ENCODE measurements at regions of chr6 and their contacts with region 1.

Region 1: DNA sequence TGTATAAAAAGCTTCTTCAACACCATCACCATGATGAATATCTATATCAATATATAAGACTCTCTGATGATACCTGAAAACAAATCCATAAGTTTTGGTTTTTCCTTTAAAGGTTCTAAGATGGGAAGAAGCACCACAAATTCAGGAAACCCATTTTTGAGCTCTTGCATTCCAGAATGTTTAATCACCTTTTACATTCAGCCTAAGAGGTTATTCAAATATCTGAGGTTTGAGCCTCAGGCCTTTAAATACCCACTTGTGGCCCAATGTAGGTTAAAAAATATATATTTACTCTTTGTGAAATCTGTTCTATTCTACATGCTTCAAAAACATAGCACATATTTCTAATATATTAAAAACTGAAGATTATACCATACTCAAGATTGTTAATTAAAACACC is 17.6 kb downstream of the HDAC2 start:
- DNase-seq: no peak
- H3K4me3 ChIP-seq: no peak overlapping the region
- H3K27ac ChIP-seq: no peak overlapping the region
- H3K4me1 ChIP-seq: no peaks in the 10 kb centered on the region
- H3K27me3 ChIP-seq: no peaks in the 10 kb centered on the region
- CTCF ChIP-seq: no peak
- EP300 ChIP-seq: no peak
- POLR2A ChIP-seq: no peak
- RAD21 ChIP-seq: no peak

Region 2: DNA sequence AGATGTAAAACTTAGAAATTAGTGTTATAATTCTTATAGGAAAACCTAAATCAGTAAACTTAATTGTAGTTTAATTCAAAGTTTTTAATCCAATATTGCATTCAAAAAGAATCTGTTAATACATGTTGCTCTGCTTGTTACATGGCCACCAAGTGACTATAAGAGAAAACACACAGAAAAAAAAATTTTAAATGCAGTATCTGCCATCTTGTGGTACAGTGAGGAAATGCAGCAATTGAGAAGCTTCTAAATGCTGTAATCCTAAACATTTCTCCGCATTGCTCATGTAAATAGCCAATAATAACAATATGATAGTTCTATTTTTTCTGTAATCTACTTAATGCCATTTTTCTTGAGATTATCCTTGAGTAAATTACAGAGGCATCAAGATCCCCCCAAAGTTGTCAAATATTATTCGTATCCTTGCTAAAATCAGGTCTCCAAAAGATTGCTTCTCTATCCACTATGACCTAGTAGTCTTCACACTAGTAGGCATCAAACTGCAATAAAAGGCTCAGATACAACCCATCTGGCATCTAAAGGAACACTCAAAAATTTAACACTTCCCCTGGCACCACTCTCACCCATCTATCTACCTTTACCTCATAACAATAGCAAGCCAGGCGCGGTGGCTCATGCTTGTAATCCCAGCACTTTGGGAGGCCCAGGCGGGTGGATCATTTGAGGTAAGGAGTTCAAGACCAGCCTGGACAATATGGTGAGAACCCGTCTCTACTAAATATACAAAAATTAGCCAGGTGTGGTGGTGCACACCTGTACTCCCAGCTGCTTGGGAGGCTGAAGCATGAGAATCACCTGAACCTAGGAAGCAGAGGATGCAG is 17.0 kb before region 1 on chr6:
- CTCF ChIA-PET with region 1: interaction called, 11 read pairs
- POLR2A ChIA-PET with region 1: interaction called, 5 read pairs
- DNase-seq: no peak
- H3K4me3 ChIP-seq: no peak overlapping the region
- H3K27ac ChIP-seq: no peak overlapping the region
- H3K4me1 ChIP-seq: no peaks in the 10 kb centered on the region
- H3K27me3 ChIP-seq: no peaks in the 10 kb centered on the region
- CTCF ChIP-seq: peak in 2 of 3 experiments; percentile 63 to 66; a peak in 2 of 4 replicates
- EP300 ChIP-seq: no peak
- POLR2A ChIP-seq: no peak
- RAD21 ChIP-seq: peak; percentile 51 to 55

Region 3: DNA sequence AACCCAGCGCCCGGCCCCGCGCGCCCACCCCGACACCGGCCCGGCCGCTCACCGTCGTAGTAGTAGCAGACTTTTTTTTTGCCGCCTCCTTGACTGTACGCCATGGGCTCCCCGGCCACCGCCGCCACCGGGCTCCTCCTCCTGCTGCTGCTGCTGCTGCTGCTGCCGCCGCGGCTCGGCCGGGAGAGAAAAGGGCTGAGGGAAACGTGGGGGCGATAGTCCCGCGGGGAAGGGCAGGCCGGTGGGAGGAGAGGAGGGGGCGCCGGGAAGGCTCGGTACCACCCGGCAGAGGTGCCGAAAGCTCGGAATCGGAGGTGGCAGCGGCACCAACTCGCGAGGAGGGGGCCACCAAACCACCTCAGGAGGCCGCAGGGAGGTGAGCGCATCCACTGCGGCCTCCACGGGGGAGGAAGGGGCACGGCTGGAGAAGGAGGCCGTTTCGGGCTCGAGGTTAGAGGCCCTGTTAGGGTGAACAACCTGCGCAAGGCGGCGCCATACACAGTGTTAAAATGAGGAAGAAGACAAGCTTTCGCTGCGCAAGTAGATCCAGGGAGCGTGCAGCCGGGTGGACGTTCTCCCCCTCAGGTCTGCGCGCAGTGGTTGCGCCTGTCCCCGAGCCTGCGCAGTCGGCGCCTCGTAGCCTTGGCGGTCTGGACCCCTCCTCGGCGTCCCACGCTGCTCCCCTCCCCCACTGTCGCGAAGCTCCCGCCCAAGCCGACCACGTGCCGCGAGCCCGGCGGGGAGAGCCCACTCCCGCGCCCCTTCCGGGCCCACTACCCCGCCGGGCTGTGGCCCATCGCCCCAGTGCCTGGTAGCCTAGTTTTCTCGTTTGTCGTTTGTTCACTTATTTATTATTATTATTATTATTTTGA is 17.7 kb after region 1 on chr6 and contains the start of gene HDAC2:
- CTCF ChIA-PET with region 1: interaction called, 3 read pairs
- POLR2A ChIA-PET with region 1: interaction called, 26 read pairs
- DNase-seq: peak; percentile 57 to 92
- H3K4me3 ChIP-seq: peak within 1 kb of the TSS; percentile 84 to 99 (median 88)
- H3K27ac ChIP-seq: peak within 1 kb of the TSS; percentile 99
- H3K4me1 ChIP-seq: peaks cover 0 to 9% (median 3%) of the 10 kb centered on the region in 4 experiments; a peak in 2 of 7 replicates
- H3K27me3 ChIP-seq: peaks cover 0 to 3% (median 1%) of the 10 kb centered on the region in 4 experiments; a peak in 2 of 7 replicates
- CTCF ChIP-seq: peak in 2 of 3 experiments; percentile 3 to 20; a peak in 2 of 4 replicates
- EP300 ChIP-seq: peak in 1 of 2 experiments; percentile 98; a peak in 2 of 3 replicates
- POLR2A ChIP-seq: peak; percentile 32 to 40; a peak in 2 of 3 replicates
- RAD21 ChIP-seq: peak; percentile 13 to 29; a peak in 1 of 4 replicates
- total RNA-seq, gene HDAC2: 374 and 383 TPM in 2 replicates

Measured in H1 (cell line).